HCT116 (cell line): ENCODE measurements at regions of chr6 and their contacts with region 1.

Region 1: DNA sequence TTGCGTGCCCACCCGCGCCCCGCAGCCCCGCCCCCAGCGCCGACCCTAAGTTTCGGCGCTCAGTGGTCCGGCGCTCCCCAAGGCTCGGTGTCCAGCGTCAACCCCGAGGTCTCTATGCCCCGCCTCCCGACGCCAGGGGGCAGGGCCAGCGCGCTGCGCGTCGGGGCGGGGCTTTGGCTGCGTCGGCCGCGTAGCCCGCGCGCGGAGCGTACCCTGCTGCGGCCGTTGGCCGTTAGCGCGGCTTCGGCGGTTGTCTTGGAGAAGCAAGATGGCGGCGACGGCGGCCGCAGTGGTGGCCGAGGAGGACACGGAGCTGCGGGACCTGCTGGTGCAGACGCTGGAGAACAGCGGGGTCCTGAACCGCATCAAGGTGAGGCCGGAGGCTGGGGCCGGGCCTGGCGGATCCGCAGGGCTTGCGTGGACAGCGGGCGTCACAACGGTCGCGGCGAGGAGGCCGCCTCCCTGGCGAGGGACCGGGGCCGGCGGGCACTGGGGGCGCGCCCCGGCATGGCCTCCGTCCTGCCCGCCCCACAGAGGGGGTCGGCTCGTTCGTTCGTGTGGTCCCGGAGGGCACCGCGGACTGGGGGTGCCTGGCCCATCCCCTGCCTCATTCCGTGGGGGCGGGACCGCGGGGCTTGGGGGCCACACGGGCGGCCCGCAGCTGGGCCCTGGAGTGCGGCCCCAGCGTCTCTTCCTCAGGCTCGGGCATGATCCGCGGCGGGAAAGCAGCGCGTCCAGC is at the start of gene CEP43:
- DNase-seq: peak; percentile 88
- ATAC-seq: peak; percentile 95
- H3K4me3 ChIP-seq: peak within 1 kb of the TSS; percentile 91 to 95
- H3K27ac ChIP-seq: peak within 1 kb of the TSS; percentile 75
- H3K4me1 ChIP-seq: peaks cover 5 to 16% of the 10 kb centered on the region in 2 experiments; a peak in 3 of 4 replicates
- H3K27me3 ChIP-seq: no peaks in the 10 kb centered on the region
- CTCF ChIP-seq: no peak
- POLR2A ChIP-seq: peak; percentile 55
- RAD21 ChIP-seq: no peak
- total RNA-seq, gene CEP43: 15.8 TPM

Region 2: GRCh38 chr6:166530211-166531095 is 468.9 kb before region 1 on chr6:
- CTCF ChIA-PET with region 1: no interaction called
- POLR2A ChIA-PET with region 1: no interaction called
- RAD21 ChIA-PET with region 1: no interaction called
- intact Hi-C with region 1: loop called (anchors 10 kb)
- DNase-seq: peak; percentile 54
- ATAC-seq: peak; percentile 86
- H3K4me3 ChIP-seq: peak overlapping the region; percentile 41 to 59
- H3K27ac ChIP-seq: peak overlapping the region; percentile 23
- H3K4me1 ChIP-seq: peaks cover 15 to 23% of the 10 kb centered on the region in 2 experiments
- H3K27me3 ChIP-seq: no peaks in the 10 kb centered on the region
- CTCF ChIP-seq: no peak
- POLR2A ChIP-seq: no peak
- RAD21 ChIP-seq: no peak

Region 3: GRCh38 chr6:167141667-167142432 is 142.5 kb after region 1 on chr6:
- CTCF ChIA-PET with region 1: interaction called, 5 read pairs
- POLR2A ChIA-PET with region 1: no interaction called
- RAD21 ChIA-PET with region 1: interaction called in 1 of 2 experiments, 3 read pairs
- intact Hi-C with region 1: loop called (anchors 1 kb)
- DNase-seq: peak; percentile 24
- ATAC-seq: peak; percentile 99
- H3K4me3 ChIP-seq: no peak overlapping the region
- H3K27ac ChIP-seq: no peak overlapping the region
- H3K4me1 ChIP-seq: no peaks in the 10 kb centered on the region
- H3K27me3 ChIP-seq: peaks cover 5% of the 10 kb centered on the region; the same call in 1 of the 2 replicates
- CTCF ChIP-seq: peak; percentile 77 to 90 (median 88)
- POLR2A ChIP-seq: no peak
- RAD21 ChIP-seq: peak; percentile 96